ENCODE measurements at regions of chr4 and their contacts with region 1.

Region 1: GRCh38 chr4:6716018-6716911 is at the start of gene BLOC1S4:
- DNase-seq: peak; percentile 77 to 98 (median 88)
- ATAC-seq: peak; percentile 83
- H3K4me3 ChIP-seq: peak within 1 kb of the TSS; percentile 74 to 81
- H3K4me3 Mint-ChIP-seq: peak within 1 kb of the TSS; percentile 95
- H3K27ac ChIP-seq: peak within 1 kb of the TSS; percentile 75 to 80
- H3K27ac Mint-ChIP-seq: peak within 1 kb of the TSS; percentile 97
- H3K4me1 ChIP-seq: peaks cover 25% of the 10 kb centered on the region
- H3K4me1 Mint-ChIP-seq: peaks cover 48% of the 10 kb centered on the region
- H3K27me3 ChIP-seq: no peaks in the 10 kb centered on the region
- H3K27me3 Mint-ChIP-seq: no peaks in the 10 kb centered on the region
- CTCF ChIP-seq: peak; percentile 18
- total RNA-seq, gene BLOC1S4: 29.7 to 30.7 TPM

Region 2: DNA sequence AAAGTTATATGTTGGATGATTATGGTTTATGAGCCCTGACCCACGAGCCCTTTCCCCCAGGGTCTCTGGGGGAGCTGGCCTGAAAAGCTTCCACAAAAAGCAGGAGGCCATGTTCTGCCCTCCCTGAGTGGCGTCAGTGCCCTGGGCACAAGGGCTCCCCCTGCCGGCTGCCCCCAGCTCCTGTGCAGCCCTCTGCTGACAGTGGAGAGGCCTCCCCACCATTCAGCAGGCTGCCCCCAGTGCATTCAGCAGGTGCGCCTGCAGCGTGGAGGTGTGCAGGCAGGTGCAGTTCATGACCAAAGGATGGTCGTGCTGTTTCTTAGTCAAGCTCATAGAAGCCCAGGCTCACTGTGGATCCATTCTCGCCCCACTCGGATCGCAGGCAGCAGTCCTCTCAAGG is 35.1 kb before region 1 on chr4:
- CTCF ChIA-PET with region 1: interaction called, 114 read pairs
- POLR2A ChIA-PET with region 1: interaction called, 115 read pairs
- intact Hi-C with region 1: no loop called
- DNase-seq: no peak
- ATAC-seq: no peak
- H3K4me3 ChIP-seq: no peak overlapping the region
- H3K4me3 Mint-ChIP-seq: no peak overlapping the region
- H3K27ac ChIP-seq: no peak overlapping the region
- H3K27ac Mint-ChIP-seq: no peak overlapping the region
- H3K4me1 ChIP-seq: peaks cover 23% of the 10 kb centered on the region
- H3K4me1 Mint-ChIP-seq: peaks cover 51% of the 10 kb centered on the region
- H3K27me3 ChIP-seq: no peaks in the 10 kb centered on the region
- H3K27me3 Mint-ChIP-seq: no peaks in the 10 kb centered on the region
- CTCF ChIP-seq: no peak

Region 3: DNA sequence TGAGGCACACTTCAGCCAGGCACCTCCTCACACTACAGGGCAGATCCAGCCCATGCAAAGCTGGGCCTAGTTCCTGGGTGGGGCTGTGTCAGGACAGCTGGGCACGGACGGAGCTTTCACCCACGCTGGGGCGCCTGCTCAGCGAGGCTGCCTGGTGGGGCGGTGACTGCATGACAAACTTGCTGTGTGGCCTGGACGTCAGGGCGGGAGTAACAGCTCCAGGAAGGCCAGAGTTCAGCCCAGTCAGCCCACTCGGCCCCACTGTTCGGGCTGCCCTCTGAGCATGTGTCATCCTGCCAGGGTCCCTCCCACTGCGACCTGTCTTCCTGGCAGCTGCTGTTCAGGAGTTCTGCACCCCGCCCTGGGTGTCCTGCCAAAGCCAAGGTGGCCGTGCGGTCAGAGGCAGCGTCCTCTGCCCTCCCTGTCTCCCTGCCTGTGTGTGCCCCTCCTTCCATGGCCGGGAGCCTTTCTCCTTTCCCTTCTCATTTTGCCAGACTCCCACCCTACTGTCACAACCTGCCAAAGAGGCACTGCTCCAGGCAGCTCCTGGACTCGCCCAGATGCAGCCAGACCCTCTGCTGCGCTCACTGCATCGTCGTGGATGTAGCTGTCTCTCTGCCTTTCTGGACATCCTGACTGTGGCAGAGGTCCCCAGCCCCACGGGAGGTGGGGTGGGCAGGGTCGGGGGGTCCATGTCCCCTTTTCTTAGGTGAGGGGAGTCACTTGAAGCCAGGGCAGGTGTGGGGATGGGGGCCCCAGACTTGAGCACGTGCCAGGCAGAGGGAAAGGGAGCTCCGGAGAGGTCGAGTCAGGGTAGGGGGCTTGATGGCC is 33.3 kb after region 1 on chr4:
- CTCF ChIA-PET with region 1: no interaction called
- POLR2A ChIA-PET with region 1: no interaction called
- intact Hi-C with region 1: no loop called
- DNase-seq: no peak
- ATAC-seq: no peak
- H3K4me3 ChIP-seq: no peak overlapping the region
- H3K4me3 Mint-ChIP-seq: no peak overlapping the region
- H3K27ac ChIP-seq: no peak overlapping the region
- H3K27ac Mint-ChIP-seq: no peak overlapping the region
- H3K4me1 ChIP-seq: no peaks in the 10 kb centered on the region
- H3K4me1 Mint-ChIP-seq: peaks cover 18% of the 10 kb centered on the region
- H3K27me3 ChIP-seq: no peaks in the 10 kb centered on the region
- H3K27me3 Mint-ChIP-seq: no peaks in the 10 kb centered on the region
- CTCF ChIP-seq: no peak

Region 4: GRCh38 chr4:6824071-6824470 is 107.8 kb after region 1 on chr4:
- CTCF ChIA-PET with region 1: no interaction called
- POLR2A ChIA-PET with region 1: no interaction called
- intact Hi-C with region 1: no loop called
- DNase-seq: no peak
- ATAC-seq: no peak
- H3K4me3 ChIP-seq: no peak overlapping the region
- H3K4me3 Mint-ChIP-seq: no peak overlapping the region
- H3K27ac ChIP-seq: no peak overlapping the region
- H3K27ac Mint-ChIP-seq: peak overlapping the region; percentile 29
- H3K4me1 ChIP-seq: peaks cover 8% of the 10 kb centered on the region
- H3K4me1 Mint-ChIP-seq: peaks cover 36% of the 10 kb centered on the region
- H3K27me3 ChIP-seq: no peaks in the 10 kb centered on the region
- H3K27me3 Mint-ChIP-seq: no peaks in the 10 kb centered on the region
- CTCF ChIP-seq: no peak

Measured in CD8-positive, alpha-beta T cell (primary cell).